Activated CD4-positive, alpha-beta T cell treated with anti-CD3 and anti-CD28 coated beads, Interleukin-2, amount 10 ng/mL, durations not matched to agents 24 days and 14 days (primary cell): ENCODE measurements at regions of chr20 and their contacts with region 1.

Region 1: GRCh38 chr20:62793912-62794724 is 2.2 kb upstream of the MRGBP start:
- DNase-seq: peak; percentile 100
- H3K4me3 Mint-ChIP-seq: peak overlapping the region; percentile 87
- H3K27ac Mint-ChIP-seq: peak overlapping the region; percentile 95
- H3K4me1 Mint-ChIP-seq: peaks cover 33% of the 10 kb centered on the region
- H3K27me3 Mint-ChIP-seq: no peaks in the 10 kb centered on the region

Region 2: GRCh38 chr20:62302341-62303058 is 491.6 kb before region 1 on chr20 and contains the start of gene ADRM1:
- intact Hi-C with region 1: loop called (anchors 5 kb)
- DNase-seq: peak; percentile 99
- H3K4me3 Mint-ChIP-seq: peak within 1 kb of the TSS; percentile 98
- H3K27ac Mint-ChIP-seq: peak within 1 kb of the TSS; percentile 100
- H3K4me1 Mint-ChIP-seq: peaks cover 20% of the 10 kb centered on the region
- H3K27me3 Mint-ChIP-seq: no peaks in the 10 kb centered on the region
- total RNA-seq, gene ADRM1: 179 and 183 TPM in 2 replicates

Region 3: DNA sequence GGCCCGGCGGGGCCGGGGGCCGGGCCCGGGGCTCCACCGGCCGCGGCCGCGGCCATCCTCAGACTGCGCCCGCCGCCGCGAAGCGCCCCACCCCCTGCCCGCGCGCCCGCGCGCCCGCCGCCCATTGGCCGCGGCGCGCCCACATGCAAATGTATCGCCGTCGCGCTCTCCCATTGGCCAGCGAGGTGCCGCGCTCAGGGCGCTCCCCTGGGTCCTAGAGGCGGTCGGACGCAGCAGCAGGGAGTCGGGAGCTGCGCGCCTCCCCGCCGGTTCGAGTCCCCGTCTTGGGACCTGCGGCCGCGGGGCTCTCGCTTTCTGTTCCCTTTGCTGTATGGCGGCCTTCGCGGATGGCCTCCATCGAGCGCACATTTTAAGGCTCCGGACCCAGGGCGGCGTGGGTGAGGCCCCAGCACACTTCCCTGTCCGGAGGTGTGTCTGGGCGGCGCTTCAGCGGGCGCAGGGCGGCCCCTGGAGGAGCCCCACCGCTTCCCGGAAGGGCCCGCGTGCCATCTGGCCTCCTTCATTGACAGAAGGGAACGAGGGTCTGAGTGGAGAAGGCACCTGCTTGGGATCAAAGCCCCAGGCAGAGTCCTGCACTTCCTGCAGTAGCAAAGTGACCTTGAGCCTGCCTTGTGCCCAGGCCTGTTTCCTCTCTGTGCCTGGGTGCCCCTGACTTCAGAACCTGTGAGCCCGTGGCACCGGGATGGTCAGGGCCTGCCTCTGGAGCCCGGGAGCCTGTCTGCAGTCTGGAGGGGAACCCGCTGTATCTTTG is 386.7 kb before region 1 on chr20 and contains the start of gene CABLES2:
- intact Hi-C with region 1: loop called (anchors 1 kb)
- DNase-seq: peak; percentile 98
- H3K4me3 Mint-ChIP-seq: peak within 1 kb of the TSS; percentile 87
- H3K27ac Mint-ChIP-seq: peak within 1 kb of the TSS; percentile 89
- H3K4me1 Mint-ChIP-seq: peaks cover 24% of the 10 kb centered on the region
- H3K27me3 Mint-ChIP-seq: no peaks in the 10 kb centered on the region
- total RNA-seq, gene CABLES2: 13.1 and 13.5 TPM in 2 replicates

Region 4: DNA sequence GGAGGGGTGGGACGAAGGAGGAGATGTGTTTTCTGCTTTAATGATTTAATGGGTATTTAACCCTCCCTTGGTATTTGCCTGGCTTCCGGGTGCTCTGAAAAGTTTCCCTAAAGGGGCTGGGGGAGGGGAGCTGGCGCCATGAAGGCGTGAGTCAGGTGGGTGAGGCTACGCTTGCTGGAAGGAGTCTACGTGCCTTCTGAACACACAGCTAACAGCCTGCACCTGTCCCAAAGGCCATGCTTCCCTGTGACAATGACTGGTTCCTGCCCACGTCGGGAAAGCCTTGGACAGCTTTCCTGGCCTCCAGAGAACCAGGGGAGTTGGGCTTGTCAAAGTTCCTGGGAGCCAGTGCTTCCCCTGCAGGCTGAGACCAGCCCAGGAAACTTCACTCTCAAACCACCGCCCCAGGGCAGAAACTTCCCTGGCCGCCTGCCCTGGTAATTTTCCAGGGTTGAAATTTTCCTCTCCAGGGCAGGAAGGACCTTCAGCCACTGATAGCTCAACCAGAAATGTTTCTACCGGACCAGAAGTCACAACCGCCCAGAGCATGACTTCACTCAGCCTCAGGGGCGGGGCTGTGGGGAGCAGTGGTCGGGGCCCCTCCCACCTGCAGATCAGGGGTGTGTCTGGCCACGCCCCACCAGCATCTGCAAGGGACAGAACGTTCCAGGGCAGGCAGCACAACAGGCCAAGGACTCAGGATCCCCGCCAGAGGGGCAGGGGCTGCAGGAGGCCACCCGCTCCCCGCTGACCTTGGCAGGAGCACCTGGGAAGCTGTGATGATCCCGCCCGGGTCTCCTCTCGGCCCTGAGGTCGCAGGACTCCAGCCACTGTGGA is 170.4 kb before region 1 on chr20:
- intact Hi-C with region 1: loop called (anchors 5 kb)
- DNase-seq: peak; percentile 96
- H3K4me3 Mint-ChIP-seq: peak overlapping the region; percentile 82
- H3K27ac Mint-ChIP-seq: peak overlapping the region; percentile 99
- H3K4me1 Mint-ChIP-seq: peaks cover 31% of the 10 kb centered on the region
- H3K27me3 Mint-ChIP-seq: no peaks in the 10 kb centered on the region

Region 5: DNA sequence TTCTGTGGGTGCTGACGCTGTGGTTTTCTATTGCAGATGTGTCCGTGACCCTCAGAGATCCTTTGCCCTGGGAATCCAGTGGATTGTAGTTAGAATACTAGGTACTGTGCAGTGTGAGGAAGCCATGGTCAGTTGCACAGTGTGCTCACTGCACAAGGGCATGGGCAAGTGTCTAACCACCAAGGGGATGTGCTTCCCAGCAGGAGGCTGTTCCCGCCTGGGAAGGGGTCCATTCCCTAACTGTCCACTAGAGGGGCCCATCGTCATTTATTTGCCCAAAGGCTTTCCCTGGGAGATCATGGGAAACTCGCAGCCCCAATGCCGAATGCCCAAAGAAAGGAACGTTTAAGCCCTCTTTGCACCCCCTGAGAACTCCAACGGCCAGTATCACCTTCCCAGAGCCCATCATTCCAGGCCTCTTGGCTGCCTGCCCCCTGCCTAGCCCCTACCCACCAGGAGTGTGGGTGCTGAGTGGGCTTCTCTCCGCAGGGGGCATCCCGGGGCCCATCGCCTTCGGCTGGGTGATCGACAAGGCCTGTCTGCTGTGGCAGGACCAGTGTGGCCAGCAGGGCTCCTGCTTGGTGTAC is 125.6 kb before region 1 on chr20:
- intact Hi-C with region 1: loop called (anchors 1 kb)
- DNase-seq: peak; percentile 77
- H3K4me3 Mint-ChIP-seq: no peak overlapping the region
- H3K27ac Mint-ChIP-seq: no peak overlapping the region
- H3K4me1 Mint-ChIP-seq: peaks cover 3% of the 10 kb centered on the region
- H3K27me3 Mint-ChIP-seq: no peaks in the 10 kb centered on the region

Region 6: GRCh38 chr20:62926239-62927104 is 132.4 kb after region 1 on chr20 and contains the start of gene DIDO1:
- intact Hi-C with region 1: no loop called
- DNase-seq: peak; percentile 97
- H3K4me3 Mint-ChIP-seq: peak within 1 kb of the TSS; percentile 85
- H3K27ac Mint-ChIP-seq: peak within 1 kb of the TSS; percentile 96
- H3K4me1 Mint-ChIP-seq: peaks cover 56% of the 10 kb centered on the region
- H3K27me3 Mint-ChIP-seq: no peaks in the 10 kb centered on the region
- total RNA-seq, gene DIDO1: 58.5 and 61.2 TPM in 2 replicates